Natural killer cell (primary cell): ENCODE measurements at regions of chr14 and their contacts with region 1.

Region 1: GRCh38 chr14:101823511-101824120 is 62.1 kb downstream of the PPP2R5C start:
- DNase-seq: peak; percentile 63 to 88
- ATAC-seq: peak; percentile 47 to 70 (median 57)
- H3K4me3 ChIP-seq: peak overlapping the region; percentile 48
- H3K4me3 Mint-ChIP-seq: peak overlapping the region; percentile 81
- H3K27ac ChIP-seq: peak overlapping the region; percentile 98
- H3K27ac Mint-ChIP-seq: peak overlapping the region; percentile 97 to 99
- H3K4me1 ChIP-seq: peaks cover 75% of the 10 kb centered on the region
- H3K4me1 Mint-ChIP-seq: peaks cover 86 to 88% of the 10 kb centered on the region in 2 donors
- H3K27me3 ChIP-seq: no peaks in the 10 kb centered on the region
- H3K27me3 Mint-ChIP-seq: no peaks in the 10 kb centered on the region
- CTCF ChIP-seq: no peak

Region 2: GRCh38 chr14:100067971-100068959 is 1755.4 kb before region 1 on chr14:
- intact Hi-C with region 1: loop called (anchors 5 kb)
- DNase-seq: peak; percentile 85 to 96
- ATAC-seq: peak; percentile 53 to 76 (median 65)
- H3K4me3 ChIP-seq: peak overlapping the region; percentile 78
- H3K4me3 Mint-ChIP-seq: peak overlapping the region; percentile 90
- H3K27ac ChIP-seq: peak overlapping the region; percentile 89
- H3K27ac Mint-ChIP-seq: peak overlapping the region; percentile 93
- H3K4me1 ChIP-seq: peaks cover 76% of the 10 kb centered on the region
- H3K4me1 Mint-ChIP-seq: peaks cover 92 to 95% of the 10 kb centered on the region in 2 donors
- H3K27me3 ChIP-seq: no peaks in the 10 kb centered on the region
- H3K27me3 Mint-ChIP-seq: no peaks in the 10 kb centered on the region
- CTCF ChIP-seq: no peak

Region 3: DNA sequence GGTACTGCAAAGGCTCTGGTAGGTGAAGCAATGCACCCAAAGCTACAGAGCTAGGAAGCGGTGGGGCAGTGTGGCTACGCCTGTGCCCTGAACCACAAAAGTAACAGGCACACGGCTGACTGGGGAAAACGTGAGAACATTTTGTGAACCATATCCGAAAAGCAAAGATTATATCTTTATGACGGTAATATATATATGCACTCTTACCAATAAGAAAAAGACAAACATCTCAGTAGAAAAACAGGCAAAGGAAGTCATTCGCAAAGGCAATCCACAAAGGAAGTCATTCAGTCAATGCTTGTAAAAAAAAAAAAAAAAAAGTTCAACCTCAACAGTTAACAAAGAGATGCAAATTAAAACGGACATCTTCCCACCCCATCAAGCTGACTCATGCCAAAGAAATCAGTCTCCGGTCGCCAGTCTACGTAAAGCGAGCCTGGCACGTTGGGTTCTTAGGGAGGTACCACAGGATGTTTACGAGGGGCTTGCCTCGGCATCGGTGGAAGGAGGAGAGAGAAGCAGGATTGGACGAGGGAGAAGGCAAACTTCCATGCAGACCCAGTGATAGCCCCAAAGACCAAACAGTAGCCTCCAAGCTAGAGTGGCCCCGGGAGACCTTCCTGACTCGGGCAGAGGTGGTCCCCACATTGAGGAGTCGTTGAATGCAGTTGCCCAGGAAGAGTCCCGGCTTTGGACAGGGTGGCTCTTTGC is 101.5 kb before region 1 on chr14:
- intact Hi-C with region 1: loop called (anchors 2 kb)
- DNase-seq: peak; percentile 72 to 95
- ATAC-seq: peak; percentile 55 to 81 (median 70)
- H3K4me3 ChIP-seq: peak overlapping the region; percentile 10
- H3K4me3 Mint-ChIP-seq: peak overlapping the region; percentile 90
- H3K27ac ChIP-seq: peak overlapping the region; percentile 95
- H3K27ac Mint-ChIP-seq: peak overlapping the region; percentile 96 to 100
- H3K4me1 ChIP-seq: peaks cover 76% of the 10 kb centered on the region
- H3K4me1 Mint-ChIP-seq: peaks cover 70 to 72% of the 10 kb centered on the region in 2 donors
- H3K27me3 ChIP-seq: no peaks in the 10 kb centered on the region
- H3K27me3 Mint-ChIP-seq: no peaks in the 10 kb centered on the region
- CTCF ChIP-seq: no peak

Region 4: DNA sequence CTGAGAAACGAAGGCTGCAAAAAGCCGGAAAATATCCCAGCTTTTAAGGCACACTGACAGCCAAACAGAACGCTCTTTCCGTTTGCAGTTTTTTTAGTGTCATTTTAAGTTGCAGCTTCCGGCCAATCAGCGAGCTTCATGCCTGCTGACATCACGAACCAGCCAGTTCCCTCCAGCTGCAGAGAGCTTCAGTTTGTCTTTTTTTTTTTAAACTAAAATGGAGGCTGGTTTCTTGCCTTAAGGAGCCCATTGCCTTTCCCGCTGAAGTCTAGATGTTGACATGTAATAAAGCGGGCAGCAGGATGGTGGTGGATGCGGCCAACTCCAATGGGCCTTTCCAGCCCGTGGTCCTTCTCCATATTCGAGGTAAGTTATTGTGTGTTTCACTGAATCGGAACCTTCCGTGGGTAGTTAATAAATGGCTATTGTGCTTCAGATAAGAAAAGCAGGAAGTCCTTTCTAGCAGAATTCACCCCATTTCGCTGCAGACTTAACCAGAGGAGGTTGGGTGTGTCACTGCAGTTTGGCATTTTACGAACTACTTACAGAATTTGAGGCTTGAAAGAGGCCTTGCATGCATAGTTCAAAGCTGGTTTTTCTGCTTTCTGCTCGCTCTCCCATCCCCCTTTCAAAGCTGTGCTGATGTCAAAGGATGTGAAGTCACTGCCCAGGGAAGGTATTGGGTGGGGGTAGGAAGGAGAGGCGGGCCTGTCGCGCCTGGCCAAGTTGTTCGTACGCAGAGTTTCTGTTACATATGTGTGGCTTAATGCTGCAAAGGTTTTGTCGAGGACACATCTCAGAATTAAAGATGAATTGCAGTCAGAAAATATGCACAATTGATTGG is 13.7 kb before region 1 on chr14:
- intact Hi-C with region 1: loop called (anchors 1 kb)
- DNase-seq: peak; percentile 75 to 96
- ATAC-seq: peak; percentile 88 to 96 (median 91)
- H3K4me3 ChIP-seq: peak overlapping the region; percentile 81
- H3K4me3 Mint-ChIP-seq: peak overlapping the region; percentile 98
- H3K27ac ChIP-seq: peak overlapping the region; percentile 98
- H3K27ac Mint-ChIP-seq: peak overlapping the region; percentile 97 to 99
- H3K4me1 ChIP-seq: peaks cover 29% of the 10 kb centered on the region
- H3K4me1 Mint-ChIP-seq: peaks cover 52 to 56% of the 10 kb centered on the region in 2 donors
- H3K27me3 ChIP-seq: no peaks in the 10 kb centered on the region
- H3K27me3 Mint-ChIP-seq: no peaks in the 10 kb centered on the region
- CTCF ChIP-seq: no peak

Region 5: GRCh38 chr14:101876555-101876938 is 52.9 kb after region 1 on chr14:
- intact Hi-C with region 1: loop called (anchors 2 kb)
- DNase-seq: peak; percentile 58 to 91
- ATAC-seq: peak; percentile 59 to 84 (median 74)
- H3K4me3 ChIP-seq: no peak overlapping the region
- H3K4me3 Mint-ChIP-seq: peak overlapping the region; percentile 76
- H3K27ac ChIP-seq: peak overlapping the region; percentile 86
- H3K27ac Mint-ChIP-seq: peak overlapping the region; percentile 93 to 94
- H3K4me1 ChIP-seq: peaks cover 62% of the 10 kb centered on the region
- H3K4me1 Mint-ChIP-seq: peaks cover 81 to 89% of the 10 kb centered on the region in 2 donors
- H3K27me3 ChIP-seq: no peaks in the 10 kb centered on the region
- H3K27me3 Mint-ChIP-seq: no peaks in the 10 kb centered on the region
- CTCF ChIP-seq: no peak